Activated CD4-positive, alpha-beta memory T cell treated with anti-CD3 and anti-CD28 coated beads for 36 hours (primary cell): ENCODE measurements at regions of chr6 and their contacts with region 1.

Region 1: GRCh38 chr6:154928325-154928922 is 66.7 kb upstream of the TIAM2 start:
- DNase-seq: peak; percentile 77
- H3K4me3 Mint-ChIP-seq: no peak overlapping the region
- H3K27ac Mint-ChIP-seq: no peak overlapping the region
- H3K4me1 Mint-ChIP-seq: peaks cover 9% of the 10 kb centered on the region
- H3K27me3 Mint-ChIP-seq: no peaks in the 10 kb centered on the region

Region 2: GRCh38 chr6:154868143-154868594 is 60.3 kb before region 1 on chr6:
- CTCF ChIA-PET with region 1: interaction called, 12 read pairs
- POLR2A ChIA-PET with region 1: no interaction called
- intact Hi-C with region 1: loop called (anchors 1 kb)
- DNase-seq: no peak
- H3K4me3 Mint-ChIP-seq: no peak overlapping the region
- H3K27ac Mint-ChIP-seq: no peak overlapping the region
- H3K4me1 Mint-ChIP-seq: peaks cover 15% of the 10 kb centered on the region
- H3K27me3 Mint-ChIP-seq: no peaks in the 10 kb centered on the region

Region 3: GRCh38 chr6:154916857-154917256 is 11.6 kb before region 1 on chr6:
- CTCF ChIA-PET with region 1: interaction called, 17 read pairs
- POLR2A ChIA-PET with region 1: no interaction called
- intact Hi-C with region 1: no loop called
- DNase-seq: no peak
- H3K4me3 Mint-ChIP-seq: no peak overlapping the region
- H3K27ac Mint-ChIP-seq: no peak overlapping the region
- H3K4me1 Mint-ChIP-seq: peaks cover 13% of the 10 kb centered on the region
- H3K27me3 Mint-ChIP-seq: no peaks in the 10 kb centered on the region

Region 4: GRCh38 chr6:155248008-155249001 is 319.9 kb after region 1 on chr6:
- CTCF ChIA-PET with region 1: interaction called, 12 read pairs
- POLR2A ChIA-PET with region 1: no interaction called
- intact Hi-C with region 1: loop called (anchors 1 kb)
- DNase-seq: peak; percentile 50
- H3K4me3 Mint-ChIP-seq: no peak overlapping the region
- H3K27ac Mint-ChIP-seq: no peak overlapping the region
- H3K4me1 Mint-ChIP-seq: no peaks in the 10 kb centered on the region
- H3K27me3 Mint-ChIP-seq: no peaks in the 10 kb centered on the region

Region 5: GRCh38 chr6:155267411-155267810 is 339.0 kb after region 1 on chr6:
- CTCF ChIA-PET with region 1: interaction called, 11 read pairs
- POLR2A ChIA-PET with region 1: no interaction called
- intact Hi-C with region 1: no loop called
- DNase-seq: no peak
- H3K4me3 Mint-ChIP-seq: no peak overlapping the region
- H3K27ac Mint-ChIP-seq: no peak overlapping the region
- H3K4me1 Mint-ChIP-seq: peaks cover 6% of the 10 kb centered on the region
- H3K27me3 Mint-ChIP-seq: no peaks in the 10 kb centered on the region